Ovary (tissue), 10 donors: ENCODE measurements at regions of chr1 and their contacts with region 1.

Region 1: DNA sequence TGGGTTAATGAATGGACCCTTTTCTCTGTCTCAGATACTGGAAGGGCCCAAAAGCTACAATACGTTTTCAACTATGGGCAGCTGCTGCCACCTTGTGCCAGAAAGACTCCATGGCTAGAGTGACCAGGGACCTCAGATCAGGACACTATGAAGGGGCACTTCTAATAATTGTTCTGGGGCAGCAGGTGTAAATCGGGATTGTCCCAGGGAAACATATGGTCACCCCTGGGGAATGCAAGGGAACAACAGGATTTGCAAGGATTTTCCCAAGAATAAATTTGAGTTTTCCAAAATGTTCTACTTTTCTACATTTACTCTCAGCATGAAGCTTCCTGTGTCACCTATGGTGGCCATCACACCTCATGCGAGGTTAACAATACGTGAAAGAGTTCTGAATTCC is 12.0 kb upstream of the FCAMR start:
- DNase-seq: peak in 1 of 5 donors; percentile 38
- H3K4me3 ChIP-seq: no peak overlapping the region
- H3K27ac ChIP-seq: no peak overlapping the region
- H3K4me1 ChIP-seq: no peaks in the 10 kb centered on the region
- H3K27me3 ChIP-seq: no peaks in the 10 kb centered on the region
- CTCF ChIP-seq: no peak
- EP300 ChIP-seq: no peak
- POLR2A ChIP-seq: no peak

Region 2: GRCh38 chr1:206590025-206590758 is 392.0 kb before region 1 on chr1:
- intact Hi-C with region 1: loop called in 1 of 4 experiments (anchors 10 kb)
- DNase-seq: no peak
- H3K4me3 ChIP-seq: no peak overlapping the region
- H3K27ac ChIP-seq: peak overlapping the region in 1 of 2 donors; percentile 25
- H3K4me1 ChIP-seq: peaks cover 6% of the 10 kb centered on the region
- H3K27me3 ChIP-seq: no peaks in the 10 kb centered on the region
- CTCF ChIP-seq: peak in 1 of 3 donors; percentile 26
- EP300 ChIP-seq: no peak
- POLR2A ChIP-seq: no peak

Region 3: DNA sequence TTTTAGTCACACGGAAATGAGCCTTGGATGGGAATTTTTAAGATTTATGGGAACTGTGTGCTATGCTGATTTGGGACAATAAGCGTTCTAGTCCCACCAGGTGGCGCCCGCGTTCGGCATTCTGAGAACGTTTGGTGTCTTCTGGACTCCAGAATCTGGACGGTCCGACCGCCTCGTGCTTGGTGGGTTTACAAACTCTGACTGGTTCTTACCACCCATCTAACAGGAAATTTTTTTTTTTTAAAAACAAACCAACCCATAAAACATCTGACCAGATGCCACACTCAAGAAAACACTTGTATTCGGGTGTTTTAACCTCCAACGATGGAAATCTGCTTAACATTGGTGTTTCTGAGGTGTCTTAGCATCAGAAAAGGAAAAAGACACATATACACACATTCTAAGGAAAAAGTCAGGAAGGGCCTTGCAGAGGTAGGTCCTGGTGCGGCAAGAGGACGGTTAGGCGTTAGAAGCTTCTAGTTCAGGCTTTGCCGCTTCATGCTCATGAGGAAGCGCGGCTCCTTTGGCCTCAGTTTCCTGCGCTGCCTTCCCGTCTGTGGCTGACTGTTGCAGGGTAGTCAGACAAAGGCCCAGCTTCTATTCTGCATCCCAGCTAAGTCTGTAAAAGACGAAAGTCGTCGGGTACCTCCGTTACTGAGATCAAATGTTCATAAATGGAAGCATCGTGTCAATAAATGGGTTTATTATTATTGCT is 347.7 kb before region 1 on chr1:
- intact Hi-C with region 1: no loop called
- DNase-seq: peak; percentile 89 to 97 (median 96)
- H3K4me3 ChIP-seq: peak overlapping the region; percentile 95
- H3K27ac ChIP-seq: peak overlapping the region; percentile 48 to 78
- H3K4me1 ChIP-seq: peaks cover 1% of the 10 kb centered on the region
- H3K27me3 ChIP-seq: no peaks in the 10 kb centered on the region
- CTCF ChIP-seq: peak; percentile 58 to 87 (median 77)
- EP300 ChIP-seq: no peak
- POLR2A ChIP-seq: no peak

Region 4: GRCh38 chr1:206856674-206857464 is 125.3 kb before region 1 on chr1:
- intact Hi-C with region 1: no loop called
- DNase-seq: no peak
- H3K4me3 ChIP-seq: no peak overlapping the region
- H3K27ac ChIP-seq: no peak overlapping the region
- H3K4me1 ChIP-seq: no peaks in the 10 kb centered on the region
- H3K27me3 ChIP-seq: no peaks in the 10 kb centered on the region
- CTCF ChIP-seq: no peak
- EP300 ChIP-seq: no peak
- POLR2A ChIP-seq: no peak

Region 5: GRCh38 chr1:207032528-207033017 is 50.4 kb after region 1 on chr1 and contains the start of gene C1orf116:
- intact Hi-C with region 1: no loop called
- DNase-seq: no peak
- H3K4me3 ChIP-seq: no peak within 1 kb of the TSS
- H3K27ac ChIP-seq: no peak within 1 kb of the TSS
- H3K4me1 ChIP-seq: no peaks in the 10 kb centered on the region
- H3K27me3 ChIP-seq: no peaks in the 10 kb centered on the region
- CTCF ChIP-seq: no peak
- EP300 ChIP-seq: no peak
- POLR2A ChIP-seq: no peak
- total RNA-seq, gene C1orf116: 0.10 to 1.6 (median 0.72) TPM in 5 of 7 donors, not detected in the others